ENCODE measurements at regions of chr20 and their contacts with region 1.

Region 1: GRCh38 chr20:33810885-33811777 is at the start of gene CHMP4B:
- DNase-seq: peak; percentile 95 to 99 (median 98)
- ATAC-seq: peak; percentile 95 to 98
- H3K4me3 Mint-ChIP-seq: peak within 1 kb of the TSS; percentile 92 to 100 (median 98)
- H3K27ac Mint-ChIP-seq: peak within 1 kb of the TSS; percentile 89 to 98 (median 95)
- H3K4me1 Mint-ChIP-seq: peaks cover 32 to 51% (median 49%) of the 10 kb centered on the region in 4 donors
- H3K27me3 Mint-ChIP-seq: no peaks in the 10 kb centered on the region
- polyA plus RNA-seq, gene CHMP4B: 4.0 to 5.0 (median 4.8) TPM

Region 2: GRCh38 chr20:33731693-33732165 is 79.4 kb before region 1 on chr20 and contains the start of gene ZNF341:
- POLR2A ChIA-PET with region 1: interaction called, 21 read pairs
- DNase-seq: peak; percentile 81 to 94 (median 88)
- ATAC-seq: peak; percentile 75 to 87
- H3K4me3 Mint-ChIP-seq: peak within 1 kb of the TSS; percentile 83 to 95 (median 90)
- H3K27ac Mint-ChIP-seq: peak within 1 kb of the TSS; percentile 84 to 98 (median 95)
- H3K4me1 Mint-ChIP-seq: peaks cover 18 to 28% (median 23%) of the 10 kb centered on the region in 4 donors
- H3K27me3 Mint-ChIP-seq: no peaks in the 10 kb centered on the region
- polyA plus RNA-seq, gene ZNF341: 0.75 to 3.8 (median 1.0) TPM

Region 3: GRCh38 chr20:33853507-33853813 is 42.3 kb after region 1 on chr20:
- POLR2A ChIA-PET with region 1: interaction called, 22 read pairs
- DNase-seq: peak in 8 of 10 donors; percentile 9 to 71 (median 52)
- ATAC-seq: peak; percentile 98 to 99
- H3K4me3 Mint-ChIP-seq: peak overlapping the region; percentile 20 to 74 (median 65)
- H3K27ac Mint-ChIP-seq: peak overlapping the region; percentile 91 to 96 (median 94)
- H3K4me1 Mint-ChIP-seq: peaks cover 36 to 70% (median 60%) of the 10 kb centered on the region in 4 donors
- H3K27me3 Mint-ChIP-seq: no peaks in the 10 kb centered on the region

Region 4: GRCh38 chr20:33859157-33859695 is 48.1 kb after region 1 on chr20:
- POLR2A ChIA-PET with region 1: interaction called, 22 read pairs
- DNase-seq: peak in 7 of 10 donors; percentile 5 to 33 (median 24)
- ATAC-seq: peak; percentile 73 to 77
- H3K4me3 Mint-ChIP-seq: peak overlapping the region; percentile 48 to 90 (median 68)
- H3K27ac Mint-ChIP-seq: peak overlapping the region; percentile 83 to 94 (median 90)
- H3K4me1 Mint-ChIP-seq: peaks cover 20 to 36% (median 31%) of the 10 kb centered on the region in 4 donors
- H3K27me3 Mint-ChIP-seq: no peaks in the 10 kb centered on the region

Region 5: GRCh38 chr20:33992923-33993575 is 181.9 kb after region 1 on chr20:
- POLR2A ChIA-PET with region 1: interaction called, 18 read pairs
- DNase-seq: peak; percentile 98 to 100 (median 99)
- ATAC-seq: peak; percentile 77 to 80
- H3K4me3 Mint-ChIP-seq: peak overlapping the region; percentile 96 to 100 (median 98)
- H3K27ac Mint-ChIP-seq: peak overlapping the region; percentile 95 to 99 (median 99)
- H3K4me1 Mint-ChIP-seq: peaks cover 25 to 68% (median 64%) of the 10 kb centered on the region in 4 donors
- H3K27me3 Mint-ChIP-seq: no peaks in the 10 kb centered on the region

Region 6: DNA sequence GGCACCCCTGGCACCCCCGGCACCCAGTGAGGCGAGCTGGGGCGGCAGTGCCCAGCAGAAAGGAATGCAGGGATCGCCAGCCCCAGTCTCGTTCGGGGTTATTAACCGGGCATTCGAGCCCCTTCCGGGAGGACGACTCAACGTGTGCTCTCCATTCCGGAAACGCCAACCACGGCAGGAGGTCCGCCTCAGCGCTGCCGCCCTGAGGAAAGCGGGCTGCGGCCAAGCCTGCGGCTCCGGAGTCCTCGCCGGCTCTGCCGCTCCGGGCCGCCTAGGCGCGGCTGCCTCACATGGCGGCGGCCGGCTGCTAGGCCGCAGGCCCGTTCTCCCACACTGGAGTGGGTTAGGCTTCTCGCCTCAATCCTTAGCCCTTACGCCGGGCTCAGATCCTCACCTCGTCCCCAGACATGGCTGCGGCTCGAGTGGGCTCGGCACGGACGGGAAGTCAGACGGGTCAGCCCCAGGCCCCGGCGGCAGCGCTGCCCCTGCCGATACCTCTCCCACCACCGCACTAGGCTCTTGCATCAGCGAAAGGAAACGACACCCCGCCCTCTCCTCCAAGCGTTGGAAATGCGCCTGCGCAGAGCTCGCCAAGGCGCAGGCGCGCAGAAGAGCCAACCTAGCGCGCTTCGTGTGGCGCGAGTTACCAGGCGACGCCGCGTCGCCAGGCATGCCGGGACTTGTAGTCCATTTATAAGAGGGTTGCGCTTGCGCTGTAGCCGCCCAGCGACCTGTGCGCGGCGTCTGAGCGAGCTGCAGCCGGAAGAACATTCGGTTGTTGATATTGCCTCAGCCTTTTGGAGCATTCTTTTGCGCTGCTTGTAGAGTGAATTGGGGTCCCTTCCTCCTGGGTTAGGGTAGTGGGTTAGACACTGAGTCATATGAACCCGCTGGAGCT is 300.8 kb after region 1 on chr20 and contains the start of gene EIF2S2:
- POLR2A ChIA-PET with region 1: interaction called, 20 read pairs
- DNase-seq: peak; percentile 91 to 98 (median 94)
- ATAC-seq: peak; percentile 91 to 92
- H3K4me3 Mint-ChIP-seq: peak within 1 kb of the TSS; percentile 90 to 99 (median 96)
- H3K27ac Mint-ChIP-seq: peak within 1 kb of the TSS; percentile 96 to 100 (median 98)
- H3K4me1 Mint-ChIP-seq: peaks cover 23 to 51% (median 43%) of the 10 kb centered on the region in 4 donors
- H3K27me3 Mint-ChIP-seq: no peaks in the 10 kb centered on the region
- polyA plus RNA-seq, gene EIF2S2: 17.5 to 21.6 (median 20.2) TPM